ENCODE measurements at regions of chr17 and their contacts with region 1.

Region 1: DNA sequence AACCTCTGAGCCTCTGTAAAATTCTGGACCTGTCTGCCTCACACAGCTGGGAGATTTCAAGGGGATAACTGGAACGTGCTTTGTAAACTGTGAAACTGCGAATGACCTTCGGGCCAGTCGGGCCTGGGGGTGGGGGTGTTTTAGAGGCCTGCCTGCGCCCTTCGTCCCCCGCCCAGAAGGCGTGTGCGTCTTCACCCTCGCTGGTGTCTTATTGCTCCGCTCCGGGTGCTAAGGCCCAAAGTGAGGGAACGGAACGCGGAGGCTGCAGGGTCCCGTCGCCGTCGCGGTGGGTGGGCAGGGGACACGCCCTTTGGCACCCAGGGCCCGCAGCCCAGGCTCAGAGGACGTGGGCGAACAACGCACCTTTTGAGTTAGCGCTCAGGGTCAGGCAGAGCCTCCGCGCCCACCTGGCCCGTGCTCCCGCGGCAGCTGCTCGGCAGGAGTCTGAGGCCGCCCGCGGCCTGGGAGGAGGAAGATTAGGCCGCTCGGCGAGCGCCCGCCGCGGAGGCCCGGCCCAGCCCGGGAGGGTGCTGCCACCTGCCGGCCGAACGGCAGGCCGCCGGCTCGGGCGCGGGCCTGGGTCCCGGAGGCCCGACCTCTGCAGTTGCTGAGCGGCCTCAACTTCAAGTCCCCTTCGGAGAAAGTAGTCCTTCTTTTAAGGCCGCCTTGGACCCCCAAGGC is 29.7 kb downstream of the DCAKD start:
- DNase-seq: peak in 34 of 35 experiments; percentile 18 to 81 (median 54)
- ATAC-seq: peak; percentile 73 to 82 (median 78)
- H3K4me3 ChIP-seq: peak overlapping the region; percentile 41 to 63
- H3K4me3 Mint-ChIP-seq: peak overlapping the region; percentile 26 to 73 (median 73)
- H3K27ac ChIP-seq: no peak overlapping the region
- H3K27ac Mint-ChIP-seq: no peak overlapping the region
- H3K4me1 ChIP-seq: peaks cover 3 to 33% of the 10 kb centered on the region in 2 experiments
- H3K4me1 Mint-ChIP-seq: peaks cover 20 to 30% (median 24%) of the 10 kb centered on the region in 3 donors
- H3K27me3 ChIP-seq: peaks cover 7 to 55% of the 10 kb centered on the region in 2 experiments
- H3K27me3 Mint-ChIP-seq: peaks cover 31 to 33% of the 10 kb centered on the region in 2 donors

Region 2: DNA sequence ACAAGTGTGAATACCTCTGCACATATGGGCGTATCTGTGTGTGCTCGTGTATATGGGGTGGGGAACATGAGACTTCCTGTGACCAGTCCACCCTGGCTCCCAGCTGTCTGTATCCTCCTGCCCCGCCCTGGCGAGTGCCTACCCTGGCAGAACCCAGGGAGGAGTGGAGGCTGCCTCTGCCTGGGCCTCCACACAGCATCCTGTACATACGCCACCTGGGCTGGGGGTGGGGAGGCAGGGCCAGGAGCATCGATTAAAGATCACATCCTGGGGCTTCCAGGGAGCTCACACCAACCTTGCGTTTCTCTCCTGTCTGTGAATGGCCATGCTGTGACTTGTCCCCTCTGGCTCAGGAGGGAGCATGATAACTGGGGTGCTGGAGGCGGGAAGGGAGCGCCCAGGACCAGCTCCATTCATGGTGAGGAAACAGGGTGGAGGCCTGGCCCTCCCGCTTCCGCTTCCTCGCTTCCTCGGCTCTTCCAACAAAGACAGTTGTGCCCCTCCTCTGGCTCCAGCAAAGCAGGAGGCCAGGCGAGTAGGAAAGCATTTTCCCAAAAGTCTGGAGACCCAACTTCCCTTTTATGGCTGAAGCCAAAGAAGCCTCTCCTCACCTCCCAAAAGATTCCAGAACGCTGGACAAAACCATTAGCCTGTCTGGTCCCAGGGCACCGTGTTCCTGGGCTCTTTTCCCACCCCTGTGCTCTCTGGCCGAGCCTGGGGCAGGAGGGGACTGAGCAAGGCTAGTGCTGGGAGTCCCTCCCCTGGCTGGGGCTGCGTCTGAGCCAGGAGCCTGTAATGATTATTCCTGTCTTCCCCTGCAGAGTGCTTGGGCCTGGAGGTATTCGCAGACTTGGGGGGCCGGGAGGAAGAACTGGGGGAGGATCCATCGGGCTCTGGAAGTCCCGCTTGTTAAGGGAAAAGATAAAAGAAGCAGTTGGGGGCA is 239.9 kb before region 1 on chr17:
- CTCF ChIA-PET with region 1: no interaction called
- POLR2A ChIA-PET with region 1: no interaction called
- DNase-seq: no peak
- ATAC-seq: no peak
- H3K4me3 ChIP-seq: no peak overlapping the region
- H3K4me3 Mint-ChIP-seq: no peak overlapping the region
- H3K27ac ChIP-seq: no peak overlapping the region
- H3K27ac Mint-ChIP-seq: no peak overlapping the region
- H3K4me1 ChIP-seq: peaks cover 4 to 12% of the 10 kb centered on the region in 2 experiments
- H3K4me1 Mint-ChIP-seq: peaks cover 0 to 7% (median 3%) of the 10 kb centered on the region in 3 donors
- H3K27me3 ChIP-seq: peaks cover 0 to 52% of the 10 kb centered on the region in 2 experiments
- H3K27me3 Mint-ChIP-seq: peaks cover 0 to 8% of the 10 kb centered on the region in 2 donors

Region 3: GRCh38 chr17:44911133-44912001 is 110.4 kb before region 1 on chr17:
- CTCF ChIA-PET with region 1: interaction called in 1 of 2 experiments, 13 read pairs
- POLR2A ChIA-PET with region 1: no interaction called
- DNase-seq: peak in 29 of 35 experiments; percentile 13 to 59 (median 28)
- ATAC-seq: peak; percentile 67 to 87 (median 80)
- H3K4me3 ChIP-seq: peak overlapping the region; percentile 15 to 29
- H3K4me3 Mint-ChIP-seq: peak overlapping the region; percentile 32 to 52 (median 40)
- H3K27ac ChIP-seq: no peak overlapping the region
- H3K27ac Mint-ChIP-seq: no peak overlapping the region
- H3K4me1 ChIP-seq: peaks cover 0 to 12% of the 10 kb centered on the region in 2 experiments
- H3K4me1 Mint-ChIP-seq: peaks cover 8 to 13% (median 12%) of the 10 kb centered on the region in 3 donors
- H3K27me3 ChIP-seq: peaks cover 2 to 71% of the 10 kb centered on the region in 2 experiments
- H3K27me3 Mint-ChIP-seq: peaks cover 23 to 36% of the 10 kb centered on the region in 2 donors

Measured in T-cell (primary cell).